CD8-positive, alpha-beta T cell (primary cell): ENCODE measurements at regions of chr13 and their contacts with region 1.

Region 1: DNA sequence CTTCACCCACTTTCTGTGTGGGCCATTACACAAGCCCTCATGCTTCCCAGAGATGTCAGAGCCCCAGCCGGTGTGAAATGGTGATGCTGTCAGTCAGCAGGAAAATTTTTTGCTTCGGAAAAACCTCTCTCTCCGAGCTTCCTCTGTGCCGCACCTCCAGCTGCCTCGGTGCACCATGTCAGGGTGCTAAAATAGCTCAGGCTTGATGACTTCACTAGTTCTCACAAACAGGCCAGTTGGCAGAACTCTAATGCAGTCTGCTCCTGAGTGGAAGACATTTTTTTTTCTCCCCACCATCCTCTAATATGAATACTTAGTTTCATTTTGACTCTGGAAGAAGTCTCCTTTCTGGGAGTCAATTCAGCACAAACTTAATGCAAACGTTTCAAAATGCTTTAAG is 71.3 kb downstream of the KLF12 start:
- DNase-seq: peak in 5 of 9 experiments; percentile 10 to 66 (median 30)
- ATAC-seq: peak; percentile 16
- H3K4me3 ChIP-seq: no peak overlapping the region
- H3K4me3 Mint-ChIP-seq: peak overlapping the region; percentile 30
- H3K27ac ChIP-seq: peak overlapping the region in 1 of 2 experiments; percentile 76
- H3K27ac Mint-ChIP-seq: peak overlapping the region; percentile 81
- H3K4me1 ChIP-seq: peaks cover 55% of the 10 kb centered on the region
- H3K4me1 Mint-ChIP-seq: peaks cover 85% of the 10 kb centered on the region
- H3K27me3 ChIP-seq: no peaks in the 10 kb centered on the region
- H3K27me3 Mint-ChIP-seq: no peaks in the 10 kb centered on the region
- CTCF ChIP-seq: no peak

Region 2: GRCh38 chr13:73984949-73985691 is 77.8 kb before region 1 on chr13:
- CTCF ChIA-PET with region 1: no interaction called
- POLR2A ChIA-PET with region 1: interaction called, 6 read pairs
- intact Hi-C with region 1: loop called in 1 of 2 experiments (anchors 5 kb)
- DNase-seq: peak; percentile 51 to 93 (median 79)
- ATAC-seq: peak; percentile 90
- H3K4me3 ChIP-seq: peak overlapping the region in 1 of 2 experiments; percentile 8
- H3K4me3 Mint-ChIP-seq: peak overlapping the region; percentile 71
- H3K27ac ChIP-seq: peak overlapping the region; percentile 33 to 40
- H3K27ac Mint-ChIP-seq: no peak overlapping the region
- H3K4me1 ChIP-seq: peaks cover 53% of the 10 kb centered on the region
- H3K4me1 Mint-ChIP-seq: peaks cover 43% of the 10 kb centered on the region
- H3K27me3 ChIP-seq: no peaks in the 10 kb centered on the region
- H3K27me3 Mint-ChIP-seq: no peaks in the 10 kb centered on the region
- CTCF ChIP-seq: no peak

Region 3: GRCh38 chr13:74101436-74101835 is 38.5 kb after region 1 on chr13:
- CTCF ChIA-PET with region 1: no interaction called
- POLR2A ChIA-PET with region 1: no interaction called
- intact Hi-C with region 1: no loop called
- DNase-seq: no peak
- ATAC-seq: no peak
- H3K4me3 ChIP-seq: no peak overlapping the region
- H3K4me3 Mint-ChIP-seq: no peak overlapping the region
- H3K27ac ChIP-seq: no peak overlapping the region
- H3K27ac Mint-ChIP-seq: peak overlapping the region; percentile 38
- H3K4me1 ChIP-seq: peaks cover 33% of the 10 kb centered on the region
- H3K4me1 Mint-ChIP-seq: peaks cover 83% of the 10 kb centered on the region
- H3K27me3 ChIP-seq: no peaks in the 10 kb centered on the region
- H3K27me3 Mint-ChIP-seq: no peaks in the 10 kb centered on the region
- CTCF ChIP-seq: no peak